Posterior cingulate gyrus (tissue), 11 donors: ENCODE measurements at regions of chr3 and their contacts with region 1.

Region 1: DNA sequence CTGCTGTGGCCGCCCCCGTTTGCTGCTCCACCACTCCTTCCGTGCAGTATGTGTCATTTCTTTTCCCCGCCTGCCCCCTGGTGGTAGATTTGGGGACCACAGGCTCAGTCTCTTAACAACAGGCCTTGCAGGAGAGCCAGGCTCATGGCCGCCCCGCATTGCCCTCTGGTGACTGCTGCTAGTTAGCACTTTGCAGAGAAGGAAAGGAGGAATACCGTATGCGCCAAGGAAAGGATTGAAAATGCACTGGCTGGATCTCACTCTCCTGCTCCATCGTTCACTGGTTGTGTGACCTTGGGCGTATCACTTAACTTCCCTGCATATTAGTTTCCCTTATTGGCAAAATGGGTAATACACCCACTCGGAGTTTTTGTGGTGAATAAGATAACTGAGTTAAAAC is 39.3 kb upstream of the PXYLP1 start:
- DNase-seq: peak; percentile 94 to 100 (median 99)

Region 2: GRCh38 chr3:140898340-140899180 is 293.8 kb before region 1 on chr3:
- intact Hi-C with region 1: loop called (anchors 1 kb)
- DNase-seq: no peak

Region 3: DNA sequence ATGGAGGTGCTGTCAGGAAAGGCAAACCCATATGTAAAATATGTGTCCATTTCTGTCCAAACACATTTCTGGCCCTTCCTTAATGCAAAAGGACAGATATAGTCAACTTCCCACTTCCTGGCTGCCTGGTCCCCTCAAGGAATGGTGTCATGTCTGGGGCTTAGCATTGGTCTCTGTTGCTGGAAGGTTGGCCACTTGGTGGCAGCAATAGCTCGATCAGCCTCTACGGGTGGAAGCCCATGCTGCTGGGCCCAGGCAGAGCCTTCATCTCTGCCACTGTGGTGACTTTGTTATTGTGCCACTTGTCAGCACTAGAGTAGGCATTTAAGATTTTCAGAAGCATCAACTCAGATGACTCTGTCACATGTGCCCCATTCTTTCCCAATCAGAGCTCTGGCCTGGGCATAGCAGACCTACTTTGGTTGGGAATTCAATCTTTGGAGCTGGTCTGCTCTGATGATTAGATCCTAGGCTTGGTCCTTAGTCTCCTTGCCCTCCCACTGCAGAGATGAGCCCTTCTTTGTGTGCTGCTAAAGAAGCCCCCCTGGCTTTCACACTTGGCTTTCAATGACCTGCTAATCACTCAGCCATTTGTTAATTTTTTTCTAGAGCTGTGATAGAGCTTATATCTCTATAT is 192.2 kb before region 1 on chr3:
- intact Hi-C with region 1: loop called (anchors 1 kb)
- DNase-seq: peak; percentile 47 to 96 (median 75)

Region 4: DNA sequence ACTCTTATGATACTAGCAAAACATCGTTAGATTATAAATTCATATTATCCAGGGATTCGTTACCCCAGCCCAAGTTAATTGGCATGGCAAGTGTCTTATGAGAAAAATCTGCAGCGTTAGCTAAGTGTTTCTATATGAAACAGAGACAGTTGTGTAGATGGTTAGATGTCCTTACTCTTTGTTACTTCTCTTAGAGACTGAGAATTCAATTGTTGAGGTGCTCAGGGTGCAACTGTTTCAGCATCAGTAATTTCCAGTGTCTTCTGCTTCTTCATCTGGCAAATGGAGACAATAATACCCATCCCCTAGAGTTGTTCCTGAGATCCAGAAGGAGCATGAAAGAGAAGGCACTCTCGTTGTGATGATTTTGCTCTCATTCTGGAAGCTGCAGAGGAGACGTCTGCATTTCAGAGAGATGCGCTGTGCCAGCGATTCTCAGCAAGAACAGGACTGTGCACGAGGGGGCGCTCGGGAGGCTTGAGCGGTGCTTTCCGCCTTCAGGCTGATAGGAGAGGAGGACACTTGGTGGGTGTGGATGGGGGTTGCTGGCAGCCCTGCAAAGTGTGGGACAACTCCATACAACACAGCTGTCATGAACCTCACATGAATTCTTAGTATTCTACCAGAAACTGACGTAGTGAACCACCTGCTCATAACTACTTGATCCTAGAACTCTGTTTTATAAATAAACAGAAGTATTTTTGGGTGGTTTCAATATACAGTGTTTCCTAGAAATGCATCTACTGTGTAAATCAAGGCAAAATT is 180.9 kb before region 1 on chr3:
- intact Hi-C with region 1: loop called (anchors 1 kb)
- DNase-seq: peak; percentile 74 to 97 (median 88)